OCI-LY7 (cell line): ENCODE measurements at regions of chr6 and their contacts with region 1.

Region 1: GRCh38 chr6:125779924-125780539 is 10.7 kb upstream of the NCOA7 start:
- DNase-seq: peak; percentile 95
- H3K4me3 ChIP-seq: peak overlapping the region; percentile 74
- H3K27ac ChIP-seq: peak overlapping the region; percentile 91
- H3K4me1 ChIP-seq: peaks cover 20% of the 10 kb centered on the region
- CTCF ChIP-seq: 0 out of 2 replicates have a peak, but pooled peaks have one; percentile 37

Region 2: GRCh38 chr6:125279961-125280360 is 500.1 kb before region 1 on chr6:
- CTCF ChIA-PET with region 1: no interaction called
- POLR2A ChIA-PET with region 1: no interaction called
- intact Hi-C with region 1: no loop called
- DNase-seq: no peak
- H3K4me3 ChIP-seq: no peak overlapping the region
- H3K27ac ChIP-seq: no peak overlapping the region
- H3K4me1 ChIP-seq: no peaks in the 10 kb centered on the region
- CTCF ChIP-seq: no peak

Region 3: GRCh38 chr6:125301435-125302391 is 478.3 kb before region 1 on chr6 and contains the start of gene HDDC2:
- CTCF ChIA-PET with region 1: interaction called, 3 read pairs
- POLR2A ChIA-PET with region 1: interaction called, 14 read pairs
- intact Hi-C with region 1: no loop called
- DNase-seq: peak; percentile 71
- H3K4me3 ChIP-seq: peak within 1 kb of the TSS; percentile 83
- H3K27ac ChIP-seq: peak within 1 kb of the TSS; percentile 52
- H3K4me1 ChIP-seq: peaks cover 29% of the 10 kb centered on the region
- CTCF ChIP-seq: no peak
- total RNA-seq, gene HDDC2: 75.1 and 88.6 TPM in 2 replicates

Region 4: DNA sequence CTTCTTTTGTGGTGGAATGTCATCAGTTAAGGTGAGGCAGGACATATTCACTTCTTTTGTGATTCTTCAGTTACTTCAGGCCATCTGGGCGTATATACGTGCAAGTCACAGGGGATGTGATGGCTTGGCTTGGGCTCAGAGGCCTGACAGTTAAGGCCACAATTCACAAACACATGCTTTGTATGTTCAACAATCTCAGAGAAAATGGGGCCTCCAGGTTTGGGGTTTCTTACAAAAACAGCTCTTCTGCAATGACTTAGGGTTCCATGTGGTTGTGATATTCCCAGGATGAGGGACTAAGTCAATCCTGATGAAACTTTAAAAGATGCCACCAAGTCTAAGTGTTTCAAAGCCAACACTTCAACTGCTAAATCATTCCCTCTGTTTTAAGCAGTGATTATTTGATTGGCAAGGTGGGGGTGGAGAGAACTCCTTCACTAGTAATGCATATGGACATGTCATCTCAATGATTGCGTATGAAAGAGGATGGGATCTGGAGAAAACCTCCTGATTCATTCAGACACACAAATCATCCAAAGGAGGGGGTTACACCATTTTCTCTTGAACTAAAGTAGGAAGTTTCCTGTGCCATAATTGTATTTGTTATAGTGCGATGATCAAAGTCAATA is 72.3 kb before region 1 on chr6:
- CTCF ChIA-PET with region 1: no interaction called
- POLR2A ChIA-PET with region 1: no interaction called
- intact Hi-C with region 1: no loop called
- DNase-seq: no peak
- H3K4me3 ChIP-seq: no peak overlapping the region
- H3K27ac ChIP-seq: no peak overlapping the region
- H3K4me1 ChIP-seq: no peaks in the 10 kb centered on the region
- CTCF ChIP-seq: no peak

Region 5: GRCh38 chr6:125749173-125749864 is 30.7 kb before region 1 on chr6 and contains the start of gene HEY2:
- CTCF ChIA-PET with region 1: interaction called, 3 read pairs
- POLR2A ChIA-PET with region 1: interaction called, 5 read pairs
- intact Hi-C with region 1: loop called (anchors 2 kb)
- DNase-seq: peak; percentile 92
- H3K4me3 ChIP-seq: peak within 1 kb of the TSS; percentile 73
- H3K27ac ChIP-seq: no peak within 1 kb of the TSS
- H3K4me1 ChIP-seq: peaks cover 46% of the 10 kb centered on the region
- CTCF ChIP-seq: peak; percentile 29; the same call in 1 of the 2 replicates
- total RNA-seq, gene HEY2: 0.23 and 0.32 TPM in 2 replicates

Region 6: DNA sequence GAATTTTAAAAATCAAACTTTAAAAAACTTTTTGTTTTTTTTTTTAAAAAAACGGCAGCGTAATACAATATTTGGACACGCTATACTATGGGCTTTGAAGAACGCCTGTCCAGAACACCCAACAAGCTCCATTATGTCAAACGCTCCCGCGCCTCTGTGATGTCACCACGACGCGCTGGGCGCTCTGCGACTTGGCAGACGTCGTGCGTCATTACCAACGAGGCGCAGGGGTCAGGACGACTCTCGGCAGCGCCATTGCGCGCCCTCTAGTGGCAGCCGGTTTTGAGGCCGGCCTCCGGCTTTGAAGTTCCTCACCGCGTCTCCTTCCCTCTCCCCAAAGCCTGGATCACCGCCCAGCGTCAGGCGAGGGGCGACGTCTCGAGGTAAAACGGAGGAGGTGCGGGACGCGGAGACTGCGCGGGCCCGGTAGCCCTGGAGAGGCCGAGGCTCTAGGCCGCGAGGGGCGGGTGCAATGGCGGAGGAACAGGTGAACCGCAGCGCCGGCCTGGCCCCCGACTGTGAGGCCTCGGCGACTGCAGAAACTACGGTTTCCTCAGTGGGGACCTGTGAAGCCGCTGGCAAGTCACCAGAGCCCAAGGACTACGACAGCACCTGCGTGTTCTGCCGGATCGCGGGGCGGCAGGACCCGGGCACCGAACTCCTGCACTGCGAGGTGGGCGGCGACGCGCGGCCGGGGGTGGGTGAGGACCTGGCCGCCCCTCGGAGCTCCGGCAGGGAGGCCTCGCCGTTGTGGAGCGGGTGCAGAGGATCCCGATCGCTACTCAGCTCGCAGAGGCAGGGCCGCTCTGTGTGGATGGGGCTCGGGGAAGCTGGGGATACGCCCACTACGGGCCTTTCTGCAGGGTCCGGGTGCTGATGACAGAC is 176.7 kb after region 1 on chr6 and contains the start of gene HINT3:
- CTCF ChIA-PET with region 1: interaction called, 12 read pairs
- POLR2A ChIA-PET with region 1: interaction called, 69 read pairs
- intact Hi-C with region 1: loop called (anchors 1 kb)
- DNase-seq: peak; percentile 99
- H3K4me3 ChIP-seq: peak within 1 kb of the TSS; percentile 79
- H3K27ac ChIP-seq: peak within 1 kb of the TSS; percentile 76
- H3K4me1 ChIP-seq: peaks cover 20% of the 10 kb centered on the region
- CTCF ChIP-seq: peak; percentile 92
- total RNA-seq, gene HINT3: 10.4 and 11.8 TPM in 2 replicates

Region 7: GRCh38 chr6:125986300-125987025 is 206.4 kb after region 1 on chr6 and contains the start of gene TRMT11:
- CTCF ChIA-PET with region 1: no interaction called
- POLR2A ChIA-PET with region 1: interaction called, 17 read pairs
- intact Hi-C with region 1: loop called (anchors 1 kb)
- DNase-seq: peak; percentile 87
- H3K4me3 ChIP-seq: peak within 1 kb of the TSS; percentile 78
- H3K27ac ChIP-seq: peak within 1 kb of the TSS; percentile 44
- H3K4me1 ChIP-seq: peaks cover 32% of the 10 kb centered on the region
- CTCF ChIP-seq: peak; percentile 16; the same call in 1 of the 2 replicates
- total RNA-seq, gene TRMT11: 42.5 and 46.8 TPM in 2 replicates